K562 (cell line): ENCODE measurements at regions of chr5 and their contacts with region 1.

Region 1: DNA sequence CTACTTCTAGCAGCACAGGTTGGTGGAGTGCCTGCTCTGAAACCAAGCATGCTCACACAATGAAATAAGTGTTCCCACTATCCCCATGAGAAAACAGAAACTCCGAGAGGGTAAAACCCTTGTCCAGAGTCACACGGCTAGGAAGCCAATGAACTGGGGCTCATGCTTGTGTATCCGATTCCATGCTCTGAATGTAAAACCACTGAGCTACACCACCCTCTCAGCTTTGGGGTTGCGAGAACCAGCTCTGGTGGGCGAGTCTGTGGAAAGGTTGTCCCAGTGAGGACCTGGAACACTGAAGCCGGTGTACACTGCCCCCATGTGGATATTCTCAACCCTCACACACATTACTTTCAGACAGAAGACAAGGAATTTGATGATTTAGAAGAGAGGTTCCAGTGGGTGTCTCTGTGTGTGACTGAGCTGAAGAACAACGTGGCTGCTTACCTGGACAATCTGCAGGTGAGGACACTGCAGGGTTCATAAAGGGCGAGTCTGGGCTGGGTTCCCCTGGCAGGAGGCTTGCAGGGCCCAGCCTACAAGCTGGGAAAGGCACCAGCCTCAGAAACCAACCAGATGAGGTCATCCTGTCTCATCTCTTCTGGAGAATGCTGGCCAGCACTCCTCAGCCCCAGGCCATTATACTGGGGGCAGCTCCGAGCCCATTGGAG is 37.4 kb downstream of the ARHGEF37 start:
- DNase-seq: peak; percentile 71 to 80 (median 78)
- ATAC-seq: peak; percentile 96
- H3K4me3 ChIP-seq: no peak overlapping the region
- H3K27ac ChIP-seq: no peak overlapping the region
- H3K4me1 ChIP-seq: peaks cover 0 to 9% of the 10 kb centered on the region in 2 experiments; a peak in 4 of 5 replicates
- H3K27me3 ChIP-seq: no peaks in the 10 kb centered on the region
- CTCF ChIP-seq: peak; percentile 78 to 88 (median 88)
- EP300 ChIP-seq: no peak
- POLR2A ChIP-seq: no peak
- RAD21 ChIP-seq: peak; percentile 86 to 88

Region 2: DNA sequence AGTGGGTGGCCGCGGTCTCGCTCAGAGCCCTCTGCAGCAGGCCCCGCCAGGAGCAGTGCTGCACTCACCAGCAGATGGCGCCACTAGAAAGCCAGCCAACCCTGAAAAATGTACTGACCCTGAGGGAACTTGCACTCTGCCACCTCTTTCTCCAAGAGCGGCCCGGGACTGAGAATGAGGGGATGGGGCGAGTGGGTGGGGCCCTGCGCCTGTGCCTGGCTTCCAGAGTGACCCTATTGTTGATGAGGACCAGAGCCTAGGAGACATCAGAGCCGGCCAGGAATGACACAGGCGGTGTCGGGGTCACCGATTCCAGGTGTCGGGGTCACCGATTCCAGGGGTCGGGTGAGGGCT is 236.8 kb before region 1 on chr5:
- CTCF ChIA-PET with region 1: no interaction called
- POLR2A ChIA-PET with region 1: no interaction called
- in situ Hi-C with region 1: no loop called
- intact Hi-C with region 1: loop called (anchors 5 kb)
- DNase-seq: peak; percentile 81 to 85 (median 84)
- ATAC-seq: peak; percentile 97
- H3K4me3 ChIP-seq: no peak overlapping the region
- H3K27ac ChIP-seq: no peak overlapping the region
- H3K4me1 ChIP-seq: peaks cover 3 to 25% of the 10 kb centered on the region in 2 experiments; a peak in 3 of 5 replicates
- H3K27me3 ChIP-seq: no peaks in the 10 kb centered on the region
- CTCF ChIP-seq: peak; percentile 91 to 95 (median 92)
- EP300 ChIP-seq: no peak
- POLR2A ChIP-seq: no peak
- RAD21 ChIP-seq: peak; percentile 88 to 95

Region 3: GRCh38 chr5:149448831-149449714 is 169.6 kb before region 1 on chr5:
- CTCF ChIA-PET with region 1: interaction called, 10 read pairs
- POLR2A ChIA-PET with region 1: no interaction called
- in situ Hi-C with region 1: no loop called
- intact Hi-C with region 1: loop called (anchors 2 kb)
- DNase-seq: peak; percentile 48 to 82 (median 62)
- ATAC-seq: peak; percentile 66
- H3K4me3 ChIP-seq: no peak overlapping the region
- H3K27ac ChIP-seq: no peak overlapping the region
- H3K4me1 ChIP-seq: peaks cover 48 to 62% of the 10 kb centered on the region in 2 experiments
- H3K27me3 ChIP-seq: no peaks in the 10 kb centered on the region
- CTCF ChIP-seq: peak; percentile 70 to 86 (median 78)
- EP300 ChIP-seq: no peak; the same call in 1 of the 2 replicates
- POLR2A ChIP-seq: no peak
- RAD21 ChIP-seq: peak; percentile 81 to 90

Region 4: GRCh38 chr5:149724130-149724840 is 105.6 kb after region 1 on chr5:
- CTCF ChIA-PET with region 1: no interaction called
- POLR2A ChIA-PET with region 1: no interaction called
- in situ Hi-C with region 1: no loop called
- intact Hi-C with region 1: no loop called
- DNase-seq: no peak
- ATAC-seq: no peak; the same call in 2 of the 3 replicates
- H3K4me3 ChIP-seq: no peak overlapping the region
- H3K27ac ChIP-seq: no peak overlapping the region
- H3K4me1 ChIP-seq: peaks cover 0 to 12% of the 10 kb centered on the region in 2 experiments; a peak in 3 of 5 replicates
- H3K27me3 ChIP-seq: no peaks in the 10 kb centered on the region
- CTCF ChIP-seq: no peak
- EP300 ChIP-seq: no peak
- POLR2A ChIP-seq: no peak
- RAD21 ChIP-seq: no peak